Caco-2 (cell line): ENCODE measurements at regions of chr16 and their contacts with region 1.

Region 1: GRCh38 chr16:81696961-81697615 is 82.0 kb upstream of the PLCG2 start:
- DNase-seq: peak; percentile 67 to 76
- H3K4me3 ChIP-seq: no peak overlapping the region
- H3K4me3 Mint-ChIP-seq: no peak overlapping the region
- H3K27ac Mint-ChIP-seq: no peak overlapping the region
- H3K4me1 ChIP-seq: no peaks in the 10 kb centered on the region
- H3K4me1 Mint-ChIP-seq: no peaks in the 10 kb centered on the region
- H3K27me3 ChIP-seq: no peaks in the 10 kb centered on the region
- H3K27me3 Mint-ChIP-seq: no peaks in the 10 kb centered on the region
- CTCF ChIP-seq: peak; percentile 74 to 91

Region 2: DNA sequence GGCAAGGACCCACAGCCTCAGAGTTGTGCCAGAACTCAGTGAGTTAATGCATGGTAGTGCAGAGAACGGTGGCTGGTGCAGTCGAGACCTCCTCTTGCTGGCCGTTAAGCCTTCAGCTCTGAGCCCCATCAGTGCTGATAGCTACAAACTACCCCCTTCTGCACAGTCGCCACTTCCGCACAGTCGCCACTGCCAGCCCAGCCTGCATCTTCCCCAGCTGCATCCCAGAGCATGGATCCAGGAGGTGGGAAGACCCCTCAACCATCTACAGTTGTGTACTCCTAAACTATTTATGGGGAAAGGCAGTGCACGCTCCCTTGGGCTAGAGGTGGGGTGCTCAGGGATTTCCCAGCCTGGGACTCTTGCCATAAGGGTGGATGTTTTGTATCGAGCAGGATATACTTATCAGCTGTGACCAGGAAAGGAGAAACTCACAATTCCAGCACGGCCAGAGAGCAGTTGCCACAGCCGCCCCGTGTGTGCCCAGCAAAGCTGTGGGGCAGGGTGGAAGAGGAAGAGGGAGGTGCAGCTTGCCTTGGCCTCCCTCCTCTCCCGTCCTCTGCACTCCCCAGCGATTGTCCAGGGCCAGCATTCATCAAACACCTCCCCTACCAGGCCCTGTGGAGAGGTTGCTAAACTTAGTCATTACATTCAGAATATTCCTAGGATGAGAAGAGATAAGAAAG is 302.0 kb before region 1 on chr16:
- CTCF ChIA-PET with region 1: no interaction called
- POLR2A ChIA-PET with region 1: no interaction called
- intact Hi-C with region 1: no loop called
- DNase-seq: no peak
- H3K4me3 ChIP-seq: no peak overlapping the region
- H3K4me3 Mint-ChIP-seq: no peak overlapping the region
- H3K27ac Mint-ChIP-seq: no peak overlapping the region
- H3K4me1 ChIP-seq: no peaks in the 10 kb centered on the region
- H3K4me1 Mint-ChIP-seq: no peaks in the 10 kb centered on the region
- H3K27me3 ChIP-seq: no peaks in the 10 kb centered on the region
- H3K27me3 Mint-ChIP-seq: no peaks in the 10 kb centered on the region
- CTCF ChIP-seq: no peak

Region 3: GRCh38 chr16:81623363-81624102 is 73.6 kb before region 1 on chr16:
- CTCF ChIA-PET with region 1: interaction called, 10 read pairs
- POLR2A ChIA-PET with region 1: no interaction called
- intact Hi-C with region 1: loop called (anchors 1 kb)
- DNase-seq: peak in 1 of 2 experiments; percentile 54
- H3K4me3 ChIP-seq: no peak overlapping the region
- H3K4me3 Mint-ChIP-seq: no peak overlapping the region
- H3K27ac Mint-ChIP-seq: no peak overlapping the region
- H3K4me1 ChIP-seq: no peaks in the 10 kb centered on the region
- H3K4me1 Mint-ChIP-seq: no peaks in the 10 kb centered on the region
- H3K27me3 ChIP-seq: no peaks in the 10 kb centered on the region
- H3K27me3 Mint-ChIP-seq: no peaks in the 10 kb centered on the region
- CTCF ChIP-seq: peak; percentile 57 to 64

Region 4: DNA sequence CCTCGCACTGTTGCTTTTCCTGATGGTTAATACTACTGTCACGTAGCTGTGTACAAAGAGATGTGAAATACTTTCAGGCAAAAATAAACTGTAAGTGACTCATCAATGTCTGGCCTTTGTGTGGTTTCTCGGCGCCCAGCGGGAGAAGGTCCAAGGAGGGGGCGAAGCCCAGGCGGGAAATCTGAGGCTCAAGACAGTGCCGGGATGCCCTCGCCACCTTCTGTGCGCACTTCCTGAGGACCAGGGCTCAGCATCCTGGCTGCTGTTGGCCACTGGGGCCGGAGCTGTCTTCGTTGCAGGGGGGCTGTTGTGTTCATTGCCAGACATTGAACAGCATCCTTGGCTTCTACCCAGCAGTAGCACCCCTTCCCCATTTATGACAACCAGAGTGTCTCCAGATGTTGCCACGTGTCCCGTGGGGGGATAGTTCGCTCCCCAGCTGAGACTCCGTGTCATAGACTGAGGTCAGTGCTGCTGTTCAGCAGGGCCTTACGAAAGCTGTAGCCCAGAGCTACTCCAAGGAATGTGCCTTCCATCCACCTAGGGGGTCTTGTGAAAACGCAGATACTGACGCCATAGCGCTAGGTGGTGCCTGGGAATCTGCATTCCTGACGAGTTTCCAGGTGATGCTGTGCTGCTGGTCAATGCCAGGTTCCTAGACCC is 14.7 kb after region 1 on chr16:
- CTCF ChIA-PET with region 1: interaction called, 15 read pairs
- POLR2A ChIA-PET with region 1: no interaction called
- intact Hi-C with region 1: no loop called
- DNase-seq: no peak
- H3K4me3 ChIP-seq: no peak overlapping the region
- H3K4me3 Mint-ChIP-seq: no peak overlapping the region
- H3K27ac Mint-ChIP-seq: no peak overlapping the region
- H3K4me1 ChIP-seq: peaks cover 13% of the 10 kb centered on the region
- H3K4me1 Mint-ChIP-seq: peaks cover 20% of the 10 kb centered on the region
- H3K27me3 ChIP-seq: no peaks in the 10 kb centered on the region
- H3K27me3 Mint-ChIP-seq: no peaks in the 10 kb centered on the region
- CTCF ChIP-seq: no peak